Common myeloid progenitor, CD34-positive (primary cell): ENCODE measurements at regions of chr18 and their contacts with region 1.

Region 1: GRCh38 chr18:79657342-79657985 is 22.1 kb upstream of the CTDP1 start:
- DNase-seq: no peak
- H3K4me3 ChIP-seq: no peak overlapping the region
- H3K27ac ChIP-seq: no peak overlapping the region
- H3K4me1 ChIP-seq: no peaks in the 10 kb centered on the region
- H3K27me3 ChIP-seq: peaks cover 0 to 4% (median 0%) of the 10 kb centered on the region in 5 experiments

Region 2: DNA sequence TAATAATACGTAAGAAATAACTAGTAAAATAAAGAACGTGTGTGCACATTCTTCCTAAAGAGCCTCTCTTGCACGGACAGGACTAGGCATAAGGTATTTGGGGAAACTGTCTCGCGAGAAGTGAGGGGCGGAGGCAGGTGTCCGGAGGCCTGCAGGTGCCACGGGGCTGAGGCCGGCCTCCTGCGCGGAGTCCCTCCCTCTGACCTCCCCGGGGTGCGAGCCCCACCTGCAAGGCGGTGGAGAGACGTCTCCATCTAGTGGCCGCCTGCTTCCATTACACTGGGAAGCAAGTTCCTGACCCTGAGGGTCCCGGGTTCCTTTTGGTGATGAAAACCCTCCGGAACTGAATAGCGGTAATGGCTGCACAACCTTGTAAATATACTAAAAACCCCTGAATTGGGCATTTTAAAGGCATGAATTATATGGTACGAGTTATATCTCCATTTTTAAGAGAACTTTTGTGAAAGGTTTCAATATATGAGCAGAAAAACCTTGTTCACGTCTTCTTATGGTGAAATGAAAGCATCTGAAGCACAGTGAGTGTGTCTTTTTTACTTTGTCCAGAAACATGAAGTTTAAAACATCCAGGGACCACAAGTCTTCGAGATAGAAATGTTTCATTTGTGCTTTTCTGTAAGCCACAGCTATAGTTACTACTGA is 13.3 kb before region 1 on chr18:
- CTCF ChIA-PET with region 1: interaction called, 11 read pairs
- POLR2A ChIA-PET with region 1: no interaction called
- DNase-seq: peak; percentile 70 to 81 (median 70)
- H3K4me3 ChIP-seq: peak overlapping the region in 2 of 7 experiments; percentile 6 to 33
- H3K27ac ChIP-seq: no peak overlapping the region
- H3K4me1 ChIP-seq: peaks cover 14 to 26% (median 22%) of the 10 kb centered on the region in 4 experiments
- H3K27me3 ChIP-seq: peaks cover 0 to 2% (median 0%) of the 10 kb centered on the region in 5 experiments